ENCODE measurements at regions of chr19 and their contacts with region 1.

Region 1: GRCh38 chr19:34974646-34975045 is 10.6 kb upstream of the ZNF792 start:
- DNase-seq: no peak
- ATAC-seq: no peak
- H3K4me3 ChIP-seq: no peak overlapping the region
- H3K27ac ChIP-seq: peak overlapping the region in 1 of 2 experiments; percentile 75; a peak in 2 of 6 replicates
- H3K4me1 ChIP-seq: peaks cover 18% of the 10 kb centered on the region
- CTCF ChIP-seq: no peak
- EP300 ChIP-seq: no peak
- POLR2A ChIP-seq: no peak
- RAD21 ChIP-seq: no peak

Region 2: GRCh38 chr19:34881982-34882381 is 92.7 kb before region 1 on chr19:
- CTCF ChIA-PET with region 1: no interaction called
- POLR2A ChIA-PET with region 1: no interaction called
- DNase-seq: no peak
- ATAC-seq: no peak
- H3K4me3 ChIP-seq: no peak overlapping the region
- H3K27ac ChIP-seq: no peak overlapping the region
- H3K4me1 ChIP-seq: no peaks in the 10 kb centered on the region
- CTCF ChIP-seq: no peak
- EP300 ChIP-seq: no peak
- POLR2A ChIP-seq: no peak
- RAD21 ChIP-seq: no peak

Region 3: GRCh38 chr19:34894780-34895179 is 79.9 kb before region 1 on chr19:
- CTCF ChIA-PET with region 1: no interaction called
- POLR2A ChIA-PET with region 1: no interaction called
- DNase-seq: no peak
- ATAC-seq: no peak
- H3K4me3 ChIP-seq: no peak overlapping the region
- H3K27ac ChIP-seq: no peak overlapping the region
- H3K4me1 ChIP-seq: no peaks in the 10 kb centered on the region
- CTCF ChIP-seq: no peak
- EP300 ChIP-seq: no peak
- POLR2A ChIP-seq: no peak
- RAD21 ChIP-seq: no peak

Region 4: GRCh38 chr19:34904846-34905527 is 69.7 kb before region 1 on chr19:
- CTCF ChIA-PET with region 1: no interaction called
- POLR2A ChIA-PET with region 1: no interaction called
- DNase-seq: no peak
- ATAC-seq: peak in 1 of 2 experiments; percentile 23; a peak in 2 of 6 replicates
- H3K4me3 ChIP-seq: no peak overlapping the region
- H3K27ac ChIP-seq: no peak overlapping the region
- H3K4me1 ChIP-seq: no peaks in the 10 kb centered on the region
- CTCF ChIP-seq: no peak
- EP300 ChIP-seq: no peak
- POLR2A ChIP-seq: no peak
- RAD21 ChIP-seq: no peak

Region 5: GRCh38 chr19:34926685-34927375 is 47.8 kb before region 1 on chr19 and contains the start of gene ZNF30:
- CTCF ChIA-PET with region 1: interaction called, 18 read pairs
- POLR2A ChIA-PET with region 1: no interaction called
- DNase-seq: peak; percentile 95 to 96
- ATAC-seq: peak; percentile 99 to 100
- H3K4me3 ChIP-seq: peak within 1 kb of the TSS; percentile 64
- H3K27ac ChIP-seq: peak within 1 kb of the TSS; percentile 77 to 83
- H3K4me1 ChIP-seq: peaks cover 4% of the 10 kb centered on the region; the same call in 2 of the 3 replicates
- CTCF ChIP-seq: no peak
- EP300 ChIP-seq: no peak
- POLR2A ChIP-seq: peak; percentile 92
- RAD21 ChIP-seq: peak in 1 of 2 experiments; percentile 30; a peak in 1 of 5 replicates
- polyA plus RNA-seq, gene ZNF30: 9.4 and 11.2 TPM in 2 replicates

Region 6: GRCh38 chr19:34985249-34986022 is 10.8 kb after region 1 on chr19:
- CTCF ChIA-PET with region 1: interaction called, 1,860 read pairs
- POLR2A ChIA-PET with region 1: no interaction called
- DNase-seq: no peak
- ATAC-seq: peak in 1 of 2 experiments; percentile 36; a peak in 1 of 6 replicates
- H3K4me3 ChIP-seq: no peak overlapping the region
- H3K27ac ChIP-seq: no peak overlapping the region
- H3K4me1 ChIP-seq: no peaks in the 10 kb centered on the region
- CTCF ChIP-seq: no peak
- EP300 ChIP-seq: no peak
- POLR2A ChIP-seq: no peak
- RAD21 ChIP-seq: no peak

Region 7: GRCh38 chr19:35037716-35038622 is 63.3 kb after region 1 on chr19:
- CTCF ChIA-PET with region 1: interaction called, 1,860 read pairs
- POLR2A ChIA-PET with region 1: no interaction called
- DNase-seq: no peak
- ATAC-seq: no peak
- H3K4me3 ChIP-seq: no peak overlapping the region
- H3K27ac ChIP-seq: no peak overlapping the region
- H3K4me1 ChIP-seq: peaks cover 21% of the 10 kb centered on the region
- CTCF ChIP-seq: no peak
- EP300 ChIP-seq: no peak
- POLR2A ChIP-seq: no peak
- RAD21 ChIP-seq: no peak

Region 8: DNA sequence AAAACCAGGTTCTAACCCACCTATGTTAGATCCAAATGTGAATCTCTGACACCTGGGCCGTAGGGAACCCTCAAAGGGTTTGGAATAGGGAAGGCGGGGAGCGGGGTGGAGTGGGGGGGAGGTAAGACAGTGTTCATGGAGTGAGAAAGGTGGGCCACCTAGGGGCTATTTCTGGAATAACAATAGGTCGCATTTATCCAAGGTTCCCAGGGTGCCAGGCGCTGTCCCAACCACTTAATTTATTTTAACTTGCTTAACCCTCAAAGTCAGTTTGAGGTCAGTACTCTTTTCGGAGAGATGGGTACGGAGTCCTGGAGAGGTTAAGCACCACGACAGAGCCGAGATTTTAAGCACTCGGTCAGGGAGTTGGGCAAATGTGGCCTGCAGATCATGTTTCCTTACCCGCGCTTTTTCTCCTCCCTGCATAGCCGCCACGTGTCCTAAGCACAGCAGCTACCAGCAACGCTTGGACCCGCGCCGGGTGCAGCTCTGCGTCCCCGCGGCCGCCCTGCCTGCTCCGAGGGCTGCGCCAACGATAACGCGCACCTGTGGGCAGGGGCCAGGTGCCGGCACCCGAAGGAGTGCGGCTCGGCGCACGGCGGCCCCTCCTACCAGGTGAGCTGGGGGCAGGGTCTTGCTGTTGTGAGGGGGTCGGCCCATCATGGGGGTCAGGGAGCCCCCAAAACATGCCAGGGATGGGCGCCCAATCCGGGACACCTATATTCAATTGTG is 116.0 kb after region 1 on chr19:
- CTCF ChIA-PET with region 1: interaction called, 69 read pairs
- POLR2A ChIA-PET with region 1: no interaction called
- DNase-seq: peak; percentile 82 to 99
- ATAC-seq: peak; percentile 82 to 92
- H3K4me3 ChIP-seq: peak overlapping the region; percentile 29; the same call in 2 of the 3 replicates
- H3K27ac ChIP-seq: peak overlapping the region; percentile 10 to 60; a peak in 4 of 6 replicates
- H3K4me1 ChIP-seq: peaks cover 11% of the 10 kb centered on the region; the same call in 2 of the 3 replicates
- CTCF ChIP-seq: peak; percentile 95
- EP300 ChIP-seq: no peak
- POLR2A ChIP-seq: no peak
- RAD21 ChIP-seq: peak; percentile 88 to 97

Measured in A549 (cell line).